Activated B cell treated with CpG ODN at 0.5 μM for 24 hours (primary cell): ENCODE measurements at regions of chrX and their contacts with region 1.

Region 1: GRCh38 chrX:74550295-74550802 is 64.1 kb downstream of the RLIM start:
- DNase-seq: peak; percentile 71
- ATAC-seq: peak; percentile 95
- H3K4me3 Mint-ChIP-seq: peak overlapping the region; percentile 64
- H3K27ac Mint-ChIP-seq: peak overlapping the region; percentile 56
- H3K4me1 Mint-ChIP-seq: peaks cover 3% of the 10 kb centered on the region
- H3K27me3 Mint-ChIP-seq: no peaks in the 10 kb centered on the region
- CTCF ChIP-seq: peak; percentile 60

Region 2: GRCh38 chrX:74304016-74304415 is 246.3 kb before region 1 on chrX and contains the start of gene ZCCHC13:
- CTCF ChIA-PET with region 1: no interaction called
- POLR2A ChIA-PET with region 1: no interaction called
- intact Hi-C with region 1: no loop called
- DNase-seq: no peak
- ATAC-seq: no peak
- H3K4me3 Mint-ChIP-seq: no peak within 1 kb of the TSS
- H3K27ac Mint-ChIP-seq: no peak within 1 kb of the TSS
- H3K4me1 Mint-ChIP-seq: no peaks in the 10 kb centered on the region
- H3K27me3 Mint-ChIP-seq: peaks cover 2% of the 10 kb centered on the region
- CTCF ChIP-seq: no peak
- total RNA-seq, gene ZCCHC13: not detected in 2 replicates

Region 3: GRCh38 chrX:74343343-74344279 is 206.7 kb before region 1 on chrX:
- CTCF ChIA-PET with region 1: no interaction called
- POLR2A ChIA-PET with region 1: no interaction called
- intact Hi-C with region 1: loop called (anchors 1 kb)
- DNase-seq: no peak
- ATAC-seq: peak; percentile 70
- H3K4me3 Mint-ChIP-seq: no peak overlapping the region
- H3K27ac Mint-ChIP-seq: no peak overlapping the region
- H3K4me1 Mint-ChIP-seq: peaks cover 12% of the 10 kb centered on the region
- H3K27me3 Mint-ChIP-seq: peaks cover 3% of the 10 kb centered on the region
- CTCF ChIP-seq: no peak

Region 4: DNA sequence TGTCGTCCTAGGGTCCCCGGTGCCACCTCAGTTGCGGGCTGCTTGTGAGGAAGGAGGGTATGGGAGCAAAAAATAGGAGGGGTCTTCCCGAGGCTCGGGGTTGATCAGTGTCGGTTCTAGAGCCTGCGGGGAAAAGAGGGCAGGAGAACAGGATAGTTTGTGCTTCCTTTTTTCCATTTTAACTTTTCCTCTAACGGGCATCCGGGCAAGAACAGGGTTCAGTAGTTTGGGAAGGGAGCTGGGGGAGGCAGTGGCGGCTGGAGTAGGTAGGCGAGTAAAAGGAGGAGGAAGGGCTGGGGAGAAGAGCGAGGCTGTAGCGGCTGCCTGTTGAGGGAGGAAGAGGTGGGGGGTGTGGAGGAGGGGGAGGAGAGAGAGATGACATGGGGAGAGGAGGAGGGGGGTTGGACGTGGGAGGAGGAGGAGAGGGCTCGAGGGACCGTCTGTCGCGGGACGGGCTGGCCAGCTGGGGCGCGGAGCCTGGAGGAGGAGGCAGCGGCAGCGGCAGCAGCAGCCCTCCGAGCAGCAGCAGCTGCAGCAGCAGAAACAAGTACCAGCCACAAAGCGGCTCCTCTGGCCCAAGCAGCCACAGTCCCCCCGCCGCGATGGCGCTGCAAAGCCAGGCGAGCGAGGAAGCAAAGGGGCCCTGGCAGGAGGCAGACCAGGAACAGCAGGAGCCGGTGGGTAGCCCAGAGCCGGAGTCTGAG is 129.2 kb before region 1 on chrX and contains the start of gene SLC16A2:
- CTCF ChIA-PET with region 1: no interaction called
- POLR2A ChIA-PET with region 1: no interaction called
- intact Hi-C with region 1: loop called (anchors 1 kb)
- DNase-seq: peak; percentile 22
- ATAC-seq: peak; percentile 62
- H3K4me3 Mint-ChIP-seq: peak within 1 kb of the TSS; percentile 80
- H3K27ac Mint-ChIP-seq: no peak within 1 kb of the TSS
- H3K4me1 Mint-ChIP-seq: peaks cover 15% of the 10 kb centered on the region
- H3K27me3 Mint-ChIP-seq: peaks cover 22% of the 10 kb centered on the region
- CTCF ChIP-seq: no peak
- total RNA-seq, gene SLC16A2: not detected in 2 replicates

Region 5: DNA sequence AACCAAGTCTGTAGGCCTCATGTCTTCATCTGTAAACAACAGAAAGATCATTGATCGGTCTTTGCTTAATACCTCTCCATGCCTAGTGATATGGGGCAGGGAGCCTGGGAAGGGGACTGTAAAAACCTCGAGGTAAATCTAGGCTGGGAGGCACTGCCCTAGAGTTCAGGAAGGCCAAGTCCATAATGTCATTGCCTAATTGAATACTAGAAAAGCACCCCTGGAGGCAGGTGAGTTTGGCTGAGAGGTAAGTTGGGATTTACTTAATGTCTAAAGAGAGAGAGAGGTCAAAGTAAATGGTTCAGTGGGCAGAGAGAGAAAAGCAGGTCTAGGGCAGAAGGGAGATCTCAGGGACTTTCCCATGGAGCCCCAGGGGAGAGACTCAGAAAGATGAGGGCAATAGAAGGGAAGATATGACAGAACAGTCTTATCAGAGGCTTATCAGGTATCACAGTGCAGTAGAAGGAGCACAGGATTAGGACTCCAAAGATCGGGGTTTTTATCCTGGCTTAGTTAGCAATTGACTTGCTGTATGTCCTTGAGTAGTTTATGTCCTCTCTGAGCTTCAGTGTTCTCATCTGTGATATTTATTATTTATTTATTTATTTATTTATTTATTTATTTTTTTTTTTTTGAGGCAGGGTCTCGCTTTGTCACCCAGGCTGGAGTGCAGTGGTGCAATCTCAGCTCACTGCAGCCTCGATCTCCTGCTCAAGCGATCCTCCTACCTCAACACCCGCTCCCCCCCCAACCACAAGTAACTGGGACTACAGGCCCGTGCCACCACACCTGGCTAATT is 43.8 kb before region 1 on chrX:
- CTCF ChIA-PET with region 1: no interaction called
- POLR2A ChIA-PET with region 1: no interaction called
- intact Hi-C with region 1: loop called (anchors 1 kb)
- DNase-seq: peak; percentile 18
- ATAC-seq: peak; percentile 99
- H3K4me3 Mint-ChIP-seq: peak overlapping the region; percentile 17
- H3K27ac Mint-ChIP-seq: peak overlapping the region; percentile 69
- H3K4me1 Mint-ChIP-seq: peaks cover 24% of the 10 kb centered on the region
- H3K27me3 Mint-ChIP-seq: no peaks in the 10 kb centered on the region
- CTCF ChIP-seq: no peak

Region 6: GRCh38 chrX:75603833-75604232 is 1053.5 kb after region 1 on chrX:
- CTCF ChIA-PET with region 1: no interaction called
- POLR2A ChIA-PET with region 1: no interaction called
- intact Hi-C with region 1: loop called (anchors 10 kb)
- DNase-seq: no peak
- ATAC-seq: no peak
- H3K4me3 Mint-ChIP-seq: no peak overlapping the region
- H3K27ac Mint-ChIP-seq: no peak overlapping the region
- H3K4me1 Mint-ChIP-seq: no peaks in the 10 kb centered on the region
- H3K27me3 Mint-ChIP-seq: no peaks in the 10 kb centered on the region
- CTCF ChIP-seq: no peak